CD4-positive, alpha-beta memory T cell (primary cell): ENCODE measurements at regions of chr7 and their contacts with region 1.

Region 1: DNA sequence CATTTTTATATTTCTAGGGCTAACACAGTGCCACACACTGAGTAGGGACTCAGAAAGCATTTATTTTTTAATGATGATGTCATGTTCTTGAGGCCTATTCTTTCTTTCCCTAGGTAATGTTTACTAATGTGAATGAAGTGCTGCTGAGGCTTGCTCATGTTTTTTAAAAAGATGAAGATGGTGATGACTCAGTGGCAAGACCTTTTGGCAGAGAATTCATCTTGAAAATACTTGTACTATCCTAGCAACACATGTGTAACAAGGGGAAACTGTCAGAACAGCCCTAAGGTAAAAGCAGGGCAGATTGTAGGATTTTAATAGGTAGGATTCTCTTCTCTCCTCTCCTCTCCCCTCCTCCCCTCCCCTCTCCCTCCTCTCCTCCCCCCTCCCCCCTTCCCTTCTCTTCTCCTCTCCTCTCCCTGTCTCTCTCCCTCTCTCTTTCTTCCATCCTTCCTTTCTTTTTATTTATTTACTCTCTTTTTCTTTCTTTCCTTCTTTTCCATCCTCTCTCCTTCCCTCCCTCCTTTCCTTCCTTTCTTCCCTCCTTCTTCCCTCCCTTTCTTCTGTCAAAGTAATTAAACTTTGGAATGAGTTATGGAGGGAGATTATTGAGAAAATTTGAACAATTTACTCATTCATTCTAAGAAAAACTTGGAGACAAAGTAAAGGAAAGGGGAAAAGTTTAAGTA is 75.3 kb downstream of the ZNF92 start:
- DNase-seq: no peak
- H3K4me3 ChIP-seq: no peak overlapping the region
- H3K4me3 Mint-ChIP-seq: no peak overlapping the region
- H3K27ac ChIP-seq: no peak overlapping the region
- H3K27ac Mint-ChIP-seq: no peak overlapping the region
- H3K4me1 ChIP-seq: peaks cover 14% of the 10 kb centered on the region
- H3K4me1 Mint-ChIP-seq: peaks cover 13 to 33% (median 23%) of the 10 kb centered on the region in 4 donors
- H3K27me3 ChIP-seq: no peaks in the 10 kb centered on the region
- H3K27me3 Mint-ChIP-seq: peaks cover 0 to 1% of the 10 kb centered on the region in 2 donors

Region 2: DNA sequence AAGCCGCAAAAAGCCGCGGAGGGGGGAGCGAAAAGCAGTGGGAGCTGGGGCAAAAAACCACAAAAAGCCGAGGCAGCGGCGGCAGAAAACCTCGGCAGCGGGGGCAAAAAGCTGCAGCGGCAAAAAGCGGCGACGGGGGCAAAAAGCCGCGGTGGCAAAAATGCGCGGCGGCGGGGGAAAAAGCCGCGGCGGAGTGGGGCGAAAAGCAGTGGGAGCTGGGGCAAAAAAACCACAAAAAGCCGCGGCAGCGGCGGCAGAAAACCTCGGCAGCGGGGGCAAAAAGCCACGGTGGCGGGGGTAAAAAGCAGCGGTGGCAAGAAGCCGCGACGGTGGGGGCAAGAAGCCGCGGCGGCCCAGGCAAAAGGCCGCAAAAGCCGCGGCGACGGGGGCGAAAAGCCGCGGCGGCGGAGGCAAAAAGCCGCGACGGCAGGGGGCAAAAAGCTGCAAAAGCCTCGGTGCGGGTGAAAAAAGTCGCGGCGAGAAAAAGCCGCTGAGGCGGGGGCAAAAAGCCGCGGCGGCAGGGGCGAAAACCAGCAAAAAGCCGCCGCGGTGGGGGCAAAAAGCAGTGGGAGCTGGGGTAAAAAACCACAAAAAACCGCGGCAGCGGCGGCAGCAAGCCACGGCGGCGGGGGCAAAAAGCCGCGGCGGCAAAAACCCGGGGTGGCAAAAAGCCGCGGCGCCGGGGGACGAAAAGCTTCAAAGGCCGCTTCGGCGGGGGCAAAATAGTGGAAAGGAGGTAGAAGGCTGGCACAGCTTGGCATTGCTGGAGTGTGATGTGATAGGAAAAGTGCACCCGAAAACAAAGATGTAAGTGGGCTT is 60.6 kb after region 1 on chr7:
- CTCF ChIA-PET with region 1: no interaction called
- POLR2A ChIA-PET with region 1: no interaction called
- intact Hi-C with region 1: loop called (anchors 10 kb)
- DNase-seq: peak in 4 of 5 donors; percentile 5 to 35 (median 17)
- H3K4me3 ChIP-seq: peak overlapping the region in 1 of 2 donors; percentile 28
- H3K4me3 Mint-ChIP-seq: peak overlapping the region; percentile 53 to 84 (median 81)
- H3K27ac ChIP-seq: no peak overlapping the region
- H3K27ac Mint-ChIP-seq: peak overlapping the region in 4 of 7 donors; percentile 30 to 54 (median 50)
- H3K4me1 ChIP-seq: peaks cover 5% of the 10 kb centered on the region
- H3K4me1 Mint-ChIP-seq: peaks cover 4 to 7% (median 6%) of the 10 kb centered on the region in 4 donors
- H3K27me3 ChIP-seq: peaks cover 6% of the 10 kb centered on the region
- H3K27me3 Mint-ChIP-seq: peaks cover 15 to 16% of the 10 kb centered on the region in 2 donors